Activated naive CD4-positive, alpha-beta T cell treated with anti-CD3 and anti-CD28 coated beads, Interleukin-2, amount 10 ng/mL, durations not matched to agents 7 days and 5 days (primary cell): ENCODE measurements at regions of chr6 and their contacts with region 1.

Region 1: DNA sequence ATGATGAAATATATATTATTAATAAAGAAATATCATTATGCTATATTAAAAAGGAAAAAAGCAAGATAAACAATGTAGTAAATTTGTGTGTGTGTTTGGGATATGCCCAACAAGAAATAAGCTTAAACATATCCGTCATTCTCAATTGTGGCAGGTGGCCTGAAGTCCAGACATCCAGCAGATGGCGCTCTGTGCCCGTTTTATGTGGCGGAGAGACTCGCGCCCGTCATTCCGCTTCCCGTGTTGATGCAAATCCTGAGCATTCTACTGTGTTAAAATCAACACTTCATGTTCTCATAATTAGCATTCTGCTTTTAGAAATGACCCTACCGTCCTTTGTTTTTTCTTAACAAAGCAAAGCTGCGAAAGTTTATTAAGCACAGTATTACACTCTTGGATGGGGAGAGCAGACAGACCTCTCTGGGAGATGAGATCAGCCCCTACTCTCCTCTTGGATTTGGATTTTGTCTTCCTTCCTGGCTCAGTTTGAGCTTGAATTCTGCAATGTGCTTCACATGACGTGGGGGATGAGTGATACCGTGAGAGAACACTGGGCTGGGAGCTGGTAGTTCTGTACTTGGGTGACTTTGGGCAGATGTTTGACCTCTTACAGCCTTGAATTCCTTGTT is 125.8 kb downstream of the MCHR2 start:
- DNase-seq: peak; percentile 78
- H3K4me3 Mint-ChIP-seq: no peak overlapping the region
- H3K27ac Mint-ChIP-seq: no peak overlapping the region
- H3K4me1 Mint-ChIP-seq: no peaks in the 10 kb centered on the region
- H3K27me3 Mint-ChIP-seq: peaks cover 11% of the 10 kb centered on the region

Region 2: DNA sequence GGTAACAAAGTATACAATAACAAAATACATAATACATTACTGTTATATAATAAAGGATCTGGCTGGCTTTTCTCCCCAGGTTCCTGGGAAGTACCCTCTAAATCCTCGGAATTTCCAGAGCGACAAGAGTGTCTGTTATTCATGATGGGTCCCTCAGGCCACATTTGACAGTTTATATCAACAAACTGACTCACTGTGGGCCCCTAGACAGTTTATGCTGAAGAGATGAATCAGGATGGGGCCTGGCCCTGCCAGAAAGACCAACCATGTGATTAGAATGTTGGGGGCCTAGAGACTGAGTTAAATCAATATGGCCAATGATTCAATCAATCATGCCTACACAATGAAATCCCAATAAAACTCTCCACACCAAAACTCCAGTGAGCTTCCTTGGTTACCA is 366.4 kb before region 1 on chr6:
- CTCF ChIA-PET with region 1: no interaction called
- DNase-seq: no peak
- H3K4me3 Mint-ChIP-seq: no peak overlapping the region
- H3K27ac Mint-ChIP-seq: no peak overlapping the region
- H3K4me1 Mint-ChIP-seq: no peaks in the 10 kb centered on the region
- H3K27me3 Mint-ChIP-seq: no peaks in the 10 kb centered on the region

Region 3: GRCh38 chr6:99882128-99882702 is 14.0 kb after region 1 on chr6:
- CTCF ChIA-PET with region 1: interaction called, 15 read pairs
- DNase-seq: no peak
- H3K4me3 Mint-ChIP-seq: no peak overlapping the region
- H3K27ac Mint-ChIP-seq: no peak overlapping the region
- H3K4me1 Mint-ChIP-seq: no peaks in the 10 kb centered on the region
- H3K27me3 Mint-ChIP-seq: peaks cover 5% of the 10 kb centered on the region

Region 4: GRCh38 chr6:99905209-99906106 is 37.3 kb after region 1 on chr6:
- CTCF ChIA-PET with region 1: interaction called, 10 read pairs
- DNase-seq: no peak
- H3K4me3 Mint-ChIP-seq: no peak overlapping the region
- H3K27ac Mint-ChIP-seq: no peak overlapping the region
- H3K4me1 Mint-ChIP-seq: no peaks in the 10 kb centered on the region
- H3K27me3 Mint-ChIP-seq: no peaks in the 10 kb centered on the region

Region 5: DNA sequence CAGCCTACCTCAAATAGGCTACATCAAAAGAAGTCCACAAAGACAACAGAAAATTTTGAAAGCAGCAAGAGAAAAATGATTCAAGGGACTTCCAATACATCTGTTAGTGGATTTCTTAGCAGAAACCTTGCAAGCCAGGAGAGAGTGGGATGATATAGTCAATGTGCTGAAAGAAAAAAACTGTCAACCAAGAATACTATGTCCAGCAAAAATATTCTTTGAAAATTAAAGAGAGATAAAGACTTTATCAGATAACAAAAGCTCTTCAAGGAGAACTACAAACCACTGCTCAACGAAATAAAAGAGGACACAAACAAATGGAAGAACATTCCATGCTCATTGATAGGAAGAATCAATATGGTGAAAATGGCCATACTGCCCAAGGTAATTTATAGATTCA is 91.8 kb after region 1 on chr6:
- CTCF ChIA-PET with region 1: no interaction called
- DNase-seq: no peak
- H3K4me3 Mint-ChIP-seq: no peak overlapping the region
- H3K27ac Mint-ChIP-seq: no peak overlapping the region
- H3K4me1 Mint-ChIP-seq: no peaks in the 10 kb centered on the region
- H3K27me3 Mint-ChIP-seq: no peaks in the 10 kb centered on the region

Region 6: GRCh38 chr6:100001915-100002388 is 133.8 kb after region 1 on chr6:
- CTCF ChIA-PET with region 1: interaction called, 26 read pairs
- DNase-seq: peak; percentile 44
- H3K4me3 Mint-ChIP-seq: no peak overlapping the region
- H3K27ac Mint-ChIP-seq: no peak overlapping the region
- H3K4me1 Mint-ChIP-seq: no peaks in the 10 kb centered on the region
- H3K27me3 Mint-ChIP-seq: peaks cover 6% of the 10 kb centered on the region

Region 7: GRCh38 chr6:100099189-100100074 is 231.2 kb after region 1 on chr6:
- CTCF ChIA-PET with region 1: interaction called, 13 read pairs
- DNase-seq: no peak
- H3K4me3 Mint-ChIP-seq: no peak overlapping the region
- H3K27ac Mint-ChIP-seq: no peak overlapping the region
- H3K4me1 Mint-ChIP-seq: no peaks in the 10 kb centered on the region
- H3K27me3 Mint-ChIP-seq: peaks cover 4% of the 10 kb centered on the region